ENCODE measurements at regions of chr2 and their contacts with region 1.

Region 1: DNA sequence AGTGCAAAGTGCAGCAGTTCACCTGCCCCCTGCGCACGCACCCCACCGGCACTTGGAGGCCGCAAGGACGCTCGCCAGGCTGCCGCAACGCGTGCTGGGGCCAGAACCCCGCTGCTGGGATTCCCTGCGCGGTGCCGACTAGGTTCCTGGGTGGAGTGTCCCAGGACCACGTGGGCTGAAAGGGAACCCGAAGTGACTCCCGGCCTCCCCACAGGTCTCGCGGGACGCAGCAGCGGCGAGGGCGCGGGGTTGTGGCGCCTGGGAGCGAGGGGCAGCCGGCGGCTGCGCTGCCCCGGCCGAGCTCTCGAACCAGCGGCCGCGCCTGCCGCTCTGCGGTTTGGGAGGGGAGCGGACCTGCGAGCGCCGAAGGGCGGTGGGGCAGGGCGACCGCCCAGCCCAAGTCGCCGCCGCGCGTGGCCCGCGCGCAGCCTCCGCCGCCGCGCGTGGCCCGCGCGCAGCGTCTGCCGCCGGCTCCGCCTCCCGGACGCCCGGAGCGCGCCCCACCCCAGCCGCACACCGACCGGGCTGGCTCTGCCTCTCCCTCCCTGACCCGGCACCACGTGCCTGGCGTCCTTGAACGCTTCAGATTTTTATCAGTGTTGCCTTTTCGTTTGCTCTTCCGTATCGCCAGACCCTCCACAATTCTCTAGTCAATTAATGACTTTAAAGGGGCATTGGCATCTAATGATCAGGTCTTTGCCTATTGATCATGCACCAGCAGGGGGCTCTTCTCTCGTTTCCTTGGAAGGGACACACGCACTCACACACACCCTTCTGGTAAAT is at the start of gene FTCDNL1:
- DNase-seq: peak; percentile 81
- H3K4me3 ChIP-seq: peak within 1 kb of the TSS; percentile 55 to 77 (median 66)
- H3K27ac ChIP-seq: peak within 1 kb of the TSS; percentile 66 to 79 (median 68)
- H3K4me1 ChIP-seq: peaks cover 0 to 12% (median 8%) of the 10 kb centered on the region in 4 donors
- H3K27me3 ChIP-seq: no peaks in the 10 kb centered on the region
- CTCF ChIP-seq: peak; percentile 44 to 63 (median 49)
- EP300 ChIP-seq: no peak
- POLR2A ChIP-seq: no peak
- total RNA-seq, gene FTCDNL1: 1.8 to 2.7 TPM in 2 of 4 donors, not detected in the others

Region 2: DNA sequence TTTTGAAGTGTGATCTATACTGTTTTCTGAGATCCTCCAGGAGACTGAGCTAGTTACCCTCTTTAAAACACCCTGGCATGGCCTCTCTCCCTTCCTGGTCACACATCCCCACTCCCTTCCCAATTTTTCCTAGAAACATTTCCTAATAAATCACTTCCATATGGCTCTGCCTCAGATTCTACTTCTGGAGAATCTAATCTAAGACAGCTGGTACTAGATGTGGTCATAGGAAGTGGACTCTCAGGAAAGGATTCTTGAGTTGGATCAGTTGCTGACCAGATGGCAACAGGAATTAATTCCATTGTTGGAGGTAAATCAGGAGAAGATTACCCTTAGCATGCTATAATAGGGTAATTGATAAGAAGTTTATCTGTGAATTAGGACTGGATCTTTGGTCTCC is 703.7 kb before region 1 on chr2:
- in situ Hi-C with region 1: no loop called
- intact Hi-C with region 1: no loop called
- DNase-seq: no peak
- H3K4me3 ChIP-seq: no peak overlapping the region
- H3K27ac ChIP-seq: no peak overlapping the region
- H3K4me1 ChIP-seq: no peaks in the 10 kb centered on the region
- H3K27me3 ChIP-seq: no peaks in the 10 kb centered on the region
- CTCF ChIP-seq: no peak
- EP300 ChIP-seq: no peak
- POLR2A ChIP-seq: no peak

Region 3: DNA sequence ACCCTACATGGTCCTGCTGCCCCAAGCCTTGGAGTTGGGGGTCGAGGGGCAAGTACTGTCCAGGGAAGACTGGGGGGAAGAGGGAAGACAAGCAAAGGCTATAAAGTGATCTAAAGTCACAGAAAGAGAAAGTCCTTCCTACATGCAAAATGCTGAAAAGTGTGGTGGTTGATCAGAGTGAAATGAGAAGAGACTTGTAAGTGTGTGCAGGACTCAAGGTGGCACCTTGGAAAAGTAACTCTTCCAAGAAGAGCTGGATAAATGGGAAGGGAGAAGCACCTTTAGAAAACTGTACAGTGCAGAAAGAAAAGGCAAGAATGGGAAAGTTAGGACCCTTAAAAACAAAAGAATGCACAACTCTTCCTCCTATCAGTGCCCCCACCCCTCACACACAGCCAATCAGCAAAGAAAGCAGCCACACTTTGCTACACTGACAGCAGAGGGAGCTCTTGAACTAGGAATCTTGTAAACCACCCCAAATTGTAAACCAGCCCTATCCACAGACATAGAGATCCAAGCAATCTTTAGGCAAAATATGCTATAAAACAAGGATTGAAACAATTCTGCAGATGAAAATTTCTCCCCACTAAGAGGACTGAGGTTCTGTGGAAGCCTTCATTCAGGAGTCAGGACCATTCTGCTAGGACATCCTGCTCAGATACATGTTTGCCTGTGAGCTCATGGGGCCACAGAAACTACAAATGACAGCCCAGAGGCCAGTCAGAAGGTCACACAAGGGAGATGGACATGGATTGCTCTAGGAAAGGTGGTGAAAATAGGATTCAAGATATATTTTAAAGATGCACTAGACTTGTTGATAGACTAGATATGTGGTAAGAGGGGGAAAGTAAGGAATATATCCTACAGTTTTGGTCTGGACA is 146.3 kb before region 1 on chr2:
- in situ Hi-C with region 1: loop called in 2 of 4 experiments (anchors 10 to 25 kb)
- intact Hi-C with region 1: no loop called
- DNase-seq: peak; percentile 52
- H3K4me3 ChIP-seq: no peak overlapping the region
- H3K27ac ChIP-seq: no peak overlapping the region
- H3K4me1 ChIP-seq: peaks cover 0 to 3% (median 0%) of the 10 kb centered on the region in 4 donors
- H3K27me3 ChIP-seq: no peaks in the 10 kb centered on the region
- CTCF ChIP-seq: peak; percentile 49 to 81 (median 61)
- EP300 ChIP-seq: no peak
- POLR2A ChIP-seq: no peak